Endothelial cell of umbilical vein (primary cell): ENCODE measurements at regions of chr15 and their contacts with region 1.

Region 1: GRCh38 chr15:88620995-88621772 is at the start of gene AEN:
- DNase-seq: peak; percentile 98
- H3K4me3 ChIP-seq: peak within 1 kb of the TSS; percentile 33 to 78 (median 70)
- H3K27ac ChIP-seq: peak within 1 kb of the TSS; percentile 81
- H3K4me1 ChIP-seq: peaks cover 31% of the 10 kb centered on the region
- H3K27me3 ChIP-seq: no peaks in the 10 kb centered on the region
- CTCF ChIP-seq: no peak
- POLR2A ChIP-seq: peak; percentile 72
- total RNA-seq, gene AEN: 35.6 and 38.3 TPM in 2 replicates

Region 2: DNA sequence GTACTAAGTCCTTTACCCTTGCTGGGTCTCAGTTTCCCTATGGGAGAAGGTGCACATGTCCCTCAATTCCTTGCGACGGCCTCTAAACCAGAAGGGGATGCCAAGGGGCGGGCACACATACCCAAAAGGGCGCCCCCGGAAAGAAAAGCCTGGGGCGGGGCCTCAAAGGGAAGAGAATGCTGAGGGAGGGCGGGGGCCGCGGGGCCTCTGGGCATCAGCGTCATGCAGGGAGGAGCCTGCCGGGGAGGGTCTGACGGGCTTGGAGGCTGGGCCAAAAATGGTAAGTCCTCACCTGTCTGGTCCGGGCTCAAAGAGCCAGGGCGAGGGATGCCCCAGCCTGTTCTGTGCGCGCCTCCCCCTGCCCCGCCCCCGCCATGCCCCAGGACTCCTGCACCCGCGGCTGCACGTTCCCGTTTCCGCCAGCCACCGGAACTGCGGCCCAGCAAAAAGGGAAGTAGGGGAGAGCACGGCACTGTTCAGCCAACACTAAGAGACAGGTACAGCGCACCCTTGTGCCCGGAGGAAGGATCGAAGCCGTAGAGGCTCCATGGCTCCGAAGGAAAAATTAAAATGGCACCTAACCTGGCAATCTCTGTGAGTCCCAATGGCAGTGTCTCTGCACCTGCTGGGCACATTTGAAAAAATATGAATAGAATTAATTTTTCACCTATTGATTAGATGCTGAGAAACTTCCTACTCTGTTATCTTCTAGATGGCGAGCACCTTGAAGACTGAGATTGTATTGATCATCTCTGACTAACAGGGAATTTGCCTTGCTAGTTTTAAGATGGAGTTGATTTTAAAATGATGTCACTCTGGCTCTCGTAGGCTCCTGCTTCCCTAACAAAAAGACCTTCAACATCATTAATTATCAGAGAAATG is 74.7 kb before region 1 on chr15 and contains the start of gene DET1:
- CTCF ChIA-PET with region 1: no interaction called
- POLR2A ChIA-PET with region 1: no interaction called
- dilution Hi-C with region 1: no loop called
- intact Hi-C with region 1: loop called (anchors 2 kb)
- DNase-seq: peak; percentile 95
- H3K4me3 ChIP-seq: peak within 1 kb of the TSS; percentile 44 to 87 (median 74)
- H3K27ac ChIP-seq: peak within 1 kb of the TSS; percentile 27
- H3K4me1 ChIP-seq: no peaks in the 10 kb centered on the region
- H3K27me3 ChIP-seq: no peaks in the 10 kb centered on the region
- CTCF ChIP-seq: peak; percentile 82 to 87
- POLR2A ChIP-seq: peak; percentile 47
- total RNA-seq, gene DET1: 5.1 and 5.2 TPM in 2 replicates

Region 3: GRCh38 chr15:88604381-88605188 is 16.6 kb before region 1 on chr15:
- CTCF ChIA-PET with region 1: no interaction called
- POLR2A ChIA-PET with region 1: no interaction called
- dilution Hi-C with region 1: no loop called
- intact Hi-C with region 1: no loop called
- DNase-seq: no peak
- H3K4me3 ChIP-seq: no peak overlapping the region
- H3K27ac ChIP-seq: no peak overlapping the region
- H3K4me1 ChIP-seq: no peaks in the 10 kb centered on the region
- H3K27me3 ChIP-seq: peaks cover 44 to 53% of the 10 kb centered on the region in 2 experiments
- CTCF ChIP-seq: no peak
- POLR2A ChIP-seq: no peak

Region 4: GRCh38 chr15:88657326-88658069 is 36.3 kb after region 1 on chr15:
- CTCF ChIA-PET with region 1: interaction called, 46 read pairs
- POLR2A ChIA-PET with region 1: no interaction called
- dilution Hi-C with region 1: no loop called
- intact Hi-C with region 1: no loop called
- DNase-seq: peak; percentile 43
- H3K4me3 ChIP-seq: no peak overlapping the region
- H3K27ac ChIP-seq: no peak overlapping the region
- H3K4me1 ChIP-seq: peaks cover 14% of the 10 kb centered on the region
- H3K27me3 ChIP-seq: no peaks in the 10 kb centered on the region
- CTCF ChIP-seq: peak; percentile 73 to 80
- POLR2A ChIP-seq: no peak

Region 5: DNA sequence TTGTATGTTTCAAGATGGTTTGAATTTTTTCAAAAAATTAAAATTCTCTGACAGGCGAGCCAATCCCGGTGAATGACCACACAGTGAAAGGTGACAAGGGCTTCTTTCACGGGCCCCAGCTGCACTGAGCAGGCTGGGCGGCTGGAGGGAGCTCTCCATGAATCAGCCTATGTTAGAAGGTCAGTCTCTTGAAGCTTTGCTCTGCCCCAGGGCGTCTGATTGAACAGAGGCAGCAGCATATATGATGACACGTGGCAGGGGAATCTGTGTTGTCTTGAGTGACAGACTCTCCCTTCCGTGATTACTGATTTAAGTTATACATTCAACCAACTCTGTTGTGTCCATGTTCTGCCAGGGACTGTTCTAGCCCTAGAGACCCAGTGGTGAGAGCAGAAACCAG is 69.1 kb after region 1 on chr15:
- CTCF ChIA-PET with region 1: no interaction called
- POLR2A ChIA-PET with region 1: no interaction called
- dilution Hi-C with region 1: no loop called
- intact Hi-C with region 1: no loop called
- DNase-seq: no peak
- H3K4me3 ChIP-seq: no peak overlapping the region
- H3K27ac ChIP-seq: no peak overlapping the region
- H3K4me1 ChIP-seq: no peaks in the 10 kb centered on the region
- H3K27me3 ChIP-seq: peaks cover 0 to 2% of the 10 kb centered on the region in 2 experiments
- CTCF ChIP-seq: no peak
- POLR2A ChIP-seq: no peak

Region 6: DNA sequence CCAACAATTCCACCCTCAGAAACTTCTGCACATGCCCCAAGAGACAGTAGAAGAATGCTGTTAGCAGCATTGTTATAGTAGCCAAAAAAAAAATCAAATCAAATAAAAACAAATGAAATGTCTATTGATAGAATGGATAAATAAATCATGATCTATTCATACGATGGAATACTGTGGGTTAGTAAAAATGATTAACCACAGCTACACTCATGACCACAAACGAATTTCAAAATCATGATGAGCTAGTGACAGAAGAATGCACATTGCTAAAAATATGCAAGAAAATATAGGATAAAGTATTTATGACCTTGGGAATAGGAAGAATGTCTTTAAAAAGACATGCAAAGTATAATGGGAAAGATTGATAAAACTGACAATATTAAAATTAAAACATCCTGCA is 124.5 kb after region 1 on chr15:
- CTCF ChIA-PET with region 1: no interaction called
- POLR2A ChIA-PET with region 1: no interaction called
- dilution Hi-C with region 1: no loop called
- intact Hi-C with region 1: loop called (anchors 1 kb)
- DNase-seq: no peak
- H3K4me3 ChIP-seq: no peak overlapping the region
- H3K27ac ChIP-seq: no peak overlapping the region
- H3K4me1 ChIP-seq: peaks cover 7% of the 10 kb centered on the region
- H3K27me3 ChIP-seq: peaks cover 9 to 15% of the 10 kb centered on the region in 2 experiments
- CTCF ChIP-seq: no peak
- POLR2A ChIP-seq: no peak

Region 7: DNA sequence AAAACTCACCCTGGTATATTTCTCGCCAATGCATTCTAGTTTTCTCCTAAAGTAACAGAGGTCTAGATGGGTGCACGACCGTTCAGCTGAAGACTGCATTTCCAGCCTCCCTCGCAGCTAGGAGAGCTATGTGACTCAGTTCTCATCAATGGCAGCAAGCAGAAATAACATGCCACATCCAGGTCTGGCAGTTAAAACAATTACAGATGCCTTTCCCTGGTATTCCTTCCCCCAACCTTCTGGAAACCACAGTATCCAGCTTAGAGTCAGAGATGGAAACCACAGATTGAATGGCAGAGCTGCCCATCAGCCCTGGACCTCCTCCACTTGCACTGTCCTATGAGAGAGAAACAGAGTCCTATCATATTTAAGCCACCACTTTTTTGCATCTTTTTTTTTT is 269.3 kb after region 1 on chr15:
- CTCF ChIA-PET with region 1: interaction called, 16 read pairs
- POLR2A ChIA-PET with region 1: no interaction called
- dilution Hi-C with region 1: no loop called
- intact Hi-C with region 1: no loop called
- DNase-seq: no peak
- H3K4me3 ChIP-seq: no peak overlapping the region
- H3K27ac ChIP-seq: no peak overlapping the region
- H3K4me1 ChIP-seq: peaks cover 12% of the 10 kb centered on the region
- H3K27me3 ChIP-seq: no peaks in the 10 kb centered on the region
- CTCF ChIP-seq: no peak
- POLR2A ChIP-seq: no peak

Region 8: DNA sequence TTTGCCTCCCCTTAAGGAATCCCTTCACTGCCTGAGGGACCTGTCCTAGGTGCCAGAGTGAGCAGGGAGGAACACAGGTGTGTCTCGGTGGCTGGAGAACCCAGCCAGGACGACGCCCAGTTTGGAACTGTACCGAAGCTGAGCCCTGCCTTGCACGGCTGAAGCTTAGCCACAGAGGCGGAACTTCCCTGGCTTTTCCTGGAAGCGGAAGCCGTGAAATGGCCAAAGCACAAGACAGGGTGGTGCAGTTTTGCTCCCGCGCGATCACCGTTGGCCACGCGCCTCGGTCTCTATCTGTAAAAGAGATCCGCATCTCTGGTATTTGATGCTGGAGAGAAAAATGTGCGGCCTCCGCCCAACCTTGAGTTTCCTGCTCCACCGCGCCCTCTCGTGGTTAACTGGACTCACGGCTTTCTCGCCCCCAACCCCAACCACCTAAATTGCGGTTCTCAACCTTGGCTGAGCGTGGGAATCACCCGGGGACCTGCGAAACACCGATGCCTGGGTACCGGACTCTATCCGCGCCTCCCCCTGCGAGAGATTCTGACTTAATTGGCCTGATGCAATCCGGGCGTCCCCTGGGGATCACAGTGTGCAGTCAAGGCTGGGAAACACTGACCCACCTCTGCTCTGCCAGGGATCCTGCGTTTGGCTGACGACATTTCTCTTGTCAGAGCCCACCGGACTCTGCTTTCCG is 396.3 kb after region 1 on chr15:
- CTCF ChIA-PET with region 1: interaction called, 7 read pairs
- POLR2A ChIA-PET with region 1: no interaction called
- dilution Hi-C with region 1: no loop called
- intact Hi-C with region 1: loop called (anchors 1 kb)
- DNase-seq: peak; percentile 64
- H3K4me3 ChIP-seq: peak overlapping the region in 1 of 3 experiments; percentile 21
- H3K27ac ChIP-seq: no peak overlapping the region
- H3K4me1 ChIP-seq: no peaks in the 10 kb centered on the region
- H3K27me3 ChIP-seq: peaks cover 7 to 22% of the 10 kb centered on the region in 2 experiments
- CTCF ChIP-seq: peak; percentile 92
- POLR2A ChIP-seq: no peak